Panc1 (cell line): ENCODE measurements at regions of chrX and their contacts with region 1.

Region 1: GRCh38 chrX:150365051-150365989 is 2.2 kb downstream of the MAMLD1 start:
- DNase-seq: no peak
- ATAC-seq: peak; percentile 39
- H3K4me3 ChIP-seq: peak overlapping the region; percentile 51 to 84
- H3K27ac ChIP-seq: no peak overlapping the region
- H3K4me1 ChIP-seq: peaks cover 8% of the 10 kb centered on the region; the same call in 1 of the 2 replicates
- H3K27me3 ChIP-seq: peaks cover 4% of the 10 kb centered on the region
- CTCF ChIP-seq: peak; percentile 79

Region 2: DNA sequence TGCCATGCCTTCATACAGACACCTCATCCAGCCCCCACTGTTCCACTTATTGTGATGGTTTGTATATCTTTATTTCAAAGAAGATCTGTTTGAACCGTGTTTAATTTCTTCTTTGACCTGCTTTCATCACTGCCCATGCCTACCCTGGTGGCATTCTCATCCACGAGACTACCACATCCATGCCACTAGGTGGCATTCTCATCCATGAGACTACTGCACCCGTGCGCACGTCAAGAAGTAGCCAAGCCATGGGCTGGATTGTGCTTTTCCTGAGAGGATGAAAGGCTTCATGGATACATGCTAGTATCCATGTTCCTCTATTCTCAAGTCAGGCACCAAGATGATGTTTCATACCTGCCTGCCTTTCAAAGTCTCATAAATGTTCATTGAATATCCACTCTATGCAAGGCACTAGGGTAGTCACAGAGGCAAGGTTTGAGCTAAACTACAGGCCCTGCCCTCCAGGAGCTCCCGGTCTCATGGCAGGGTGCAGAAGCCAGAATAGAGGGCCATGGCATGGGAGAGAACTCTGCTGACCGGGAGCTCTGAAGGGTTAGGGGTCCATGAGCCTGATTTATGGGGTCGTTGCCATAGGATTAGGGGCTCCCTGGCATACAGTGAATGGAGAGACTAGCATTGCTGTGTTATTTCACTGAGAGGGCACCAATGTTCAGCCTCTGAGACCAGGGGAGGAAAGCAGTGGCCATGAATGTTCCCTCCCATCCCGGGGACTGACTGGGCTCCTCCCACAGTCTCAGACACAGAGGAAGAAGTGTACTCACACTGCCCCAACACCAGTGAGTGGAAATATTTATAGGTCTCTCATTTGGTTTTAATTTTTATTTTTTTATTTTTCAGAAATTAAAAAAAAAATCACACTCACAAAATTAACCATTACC is 402.2 kb before region 1 on chrX:
- CTCF ChIA-PET with region 1: no interaction called
- POLR2A ChIA-PET with region 1: no interaction called
- in situ Hi-C with region 1: no loop called
- intact Hi-C with region 1: loop called (anchors 5 kb)
- DNase-seq: peak; percentile 58
- ATAC-seq: peak; percentile 100
- H3K4me3 ChIP-seq: no peak overlapping the region
- H3K27ac ChIP-seq: peak overlapping the region; percentile 66; the same call in 1 of the 2 replicates
- H3K4me1 ChIP-seq: no peaks in the 10 kb centered on the region
- H3K27me3 ChIP-seq: no peaks in the 10 kb centered on the region
- CTCF ChIP-seq: peak; percentile 81

Region 3: DNA sequence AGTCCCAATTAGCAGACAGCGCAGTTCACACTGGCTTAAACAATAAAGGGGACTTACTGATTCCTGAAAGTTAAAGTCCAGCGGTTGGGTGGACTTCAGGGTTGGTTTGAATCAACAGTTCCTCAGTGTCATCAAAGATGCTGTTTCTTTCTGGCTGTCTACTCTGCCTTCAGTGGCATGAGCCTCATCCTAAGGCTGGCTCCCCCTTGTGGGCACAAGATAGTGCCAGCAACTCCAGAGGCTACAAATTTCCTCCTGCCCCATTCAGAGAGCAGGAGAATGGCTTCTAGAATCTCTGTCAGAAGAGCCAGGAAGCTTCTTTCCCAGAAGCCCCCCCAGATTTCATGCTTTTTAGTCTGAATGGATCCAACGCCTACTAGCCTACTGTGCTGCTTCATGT is 120.7 kb after region 1 on chrX:
- CTCF ChIA-PET with region 1: no interaction called
- POLR2A ChIA-PET with region 1: no interaction called
- in situ Hi-C with region 1: no loop called
- intact Hi-C with region 1: loop called (anchors 5 kb)
- DNase-seq: peak; percentile 18
- ATAC-seq: peak; percentile 85
- H3K4me3 ChIP-seq: no peak overlapping the region
- H3K27ac ChIP-seq: no peak overlapping the region
- H3K4me1 ChIP-seq: no peaks in the 10 kb centered on the region
- H3K27me3 ChIP-seq: no peaks in the 10 kb centered on the region
- CTCF ChIP-seq: peak; percentile 82

Region 4: GRCh38 chrX:150683536-150684146 is 318.3 kb after region 1 on chrX:
- CTCF ChIA-PET with region 1: no interaction called
- POLR2A ChIA-PET with region 1: no interaction called
- in situ Hi-C with region 1: no loop called
- intact Hi-C with region 1: loop called (anchors 10 kb)
- DNase-seq: no peak
- ATAC-seq: 0 out of 2 replicates have a peak, but pooled peaks have one; percentile 51
- H3K4me3 ChIP-seq: no peak overlapping the region
- H3K27ac ChIP-seq: no peak overlapping the region
- H3K4me1 ChIP-seq: peaks cover 2% of the 10 kb centered on the region; the same call in 1 of the 2 replicates
- H3K27me3 ChIP-seq: no peaks in the 10 kb centered on the region
- CTCF ChIP-seq: peak; percentile 81

Region 5: GRCh38 chrX:150694738-150695410 is 329.6 kb after region 1 on chrX:
- CTCF ChIA-PET with region 1: no interaction called
- POLR2A ChIA-PET with region 1: no interaction called
- in situ Hi-C with region 1: no loop called
- intact Hi-C with region 1: no loop called
- DNase-seq: no peak
- ATAC-seq: no peak
- H3K4me3 ChIP-seq: peak overlapping the region in 1 of 2 experiments; percentile 82; a peak in 3 of 4 replicates
- H3K27ac ChIP-seq: peak overlapping the region; percentile 88; the same call in 1 of the 2 replicates
- H3K4me1 ChIP-seq: peaks cover 6% of the 10 kb centered on the region
- H3K27me3 ChIP-seq: no peaks in the 10 kb centered on the region
- CTCF ChIP-seq: no peak

Region 6: DNA sequence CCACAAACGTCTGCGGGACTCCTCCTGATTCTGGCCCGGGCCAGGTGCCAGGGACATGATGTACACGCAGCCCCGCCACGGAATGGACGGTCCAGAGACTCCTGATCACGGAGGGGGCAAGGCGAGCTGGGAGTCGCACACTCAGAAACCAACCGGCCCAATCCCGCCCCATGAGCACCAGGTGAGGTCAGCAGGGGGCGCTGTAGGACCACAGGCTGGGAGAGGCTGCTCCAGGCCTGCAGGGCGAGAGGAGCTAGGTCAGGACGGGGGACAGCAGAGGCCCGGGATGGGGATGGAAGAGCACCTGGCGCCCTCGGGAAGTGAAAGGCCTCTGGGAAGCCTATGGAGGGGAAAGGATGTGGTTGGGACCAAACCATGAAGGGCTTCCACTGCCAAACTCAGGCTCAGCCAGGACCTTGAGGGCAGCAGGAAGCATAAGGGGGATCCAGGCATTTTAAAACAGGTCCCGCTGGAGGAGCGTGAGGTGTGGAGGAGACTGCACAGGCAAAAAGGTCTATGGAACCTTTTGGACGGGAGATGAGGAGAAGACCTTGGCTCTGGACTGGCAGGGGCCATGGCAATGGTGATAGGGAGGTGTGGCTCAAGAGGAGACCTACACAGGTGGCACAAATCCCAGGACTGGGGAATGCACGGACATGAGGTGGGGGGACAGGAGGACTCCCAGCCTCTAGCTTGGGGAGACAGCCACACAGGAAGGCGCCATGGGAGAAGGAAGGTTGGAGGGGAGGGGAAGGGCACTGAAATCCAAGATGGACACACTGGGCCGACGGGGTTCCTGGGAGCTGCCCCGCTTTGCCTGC is 407.0 kb after region 1 on chrX:
- CTCF ChIA-PET with region 1: no interaction called
- POLR2A ChIA-PET with region 1: no interaction called
- in situ Hi-C with region 1: no loop called
- intact Hi-C with region 1: no loop called
- DNase-seq: peak; percentile 27
- ATAC-seq: peak; percentile 95
- H3K4me3 ChIP-seq: no peak overlapping the region
- H3K27ac ChIP-seq: no peak overlapping the region
- H3K4me1 ChIP-seq: no peaks in the 10 kb centered on the region
- H3K27me3 ChIP-seq: no peaks in the 10 kb centered on the region
- CTCF ChIP-seq: no peak